CD14-positive monocyte (primary cell): ENCODE measurements at regions of chr22 and their contacts with region 1.

Region 1: GRCh38 chr22:36856121-36856791 is 4.5 kb upstream of the NCF4 start:
- DNase-seq: peak; percentile 89 to 92 (median 90)
- H3K4me3 ChIP-seq: peak overlapping the region in 1 of 3 experiments; percentile 39
- H3K4me3 Mint-ChIP-seq: peak overlapping the region; percentile 39 to 94
- H3K27ac ChIP-seq: no peak overlapping the region
- H3K27ac Mint-ChIP-seq: peak overlapping the region in 3 of 7 donors; percentile 59 to 91 (median 74)
- H3K4me1 ChIP-seq: peaks cover 58 to 67% of the 10 kb centered on the region in 2 donors
- H3K4me1 Mint-ChIP-seq: peaks cover 60% of the 10 kb centered on the region
- H3K27me3 ChIP-seq: peaks cover 0 to 4% of the 10 kb centered on the region in 2 donors
- H3K27me3 Mint-ChIP-seq: peaks cover under 1 to 3% (median 2%) of the 10 kb centered on the region in 3 donors
- CTCF ChIP-seq: peak; percentile 100

Region 2: DNA sequence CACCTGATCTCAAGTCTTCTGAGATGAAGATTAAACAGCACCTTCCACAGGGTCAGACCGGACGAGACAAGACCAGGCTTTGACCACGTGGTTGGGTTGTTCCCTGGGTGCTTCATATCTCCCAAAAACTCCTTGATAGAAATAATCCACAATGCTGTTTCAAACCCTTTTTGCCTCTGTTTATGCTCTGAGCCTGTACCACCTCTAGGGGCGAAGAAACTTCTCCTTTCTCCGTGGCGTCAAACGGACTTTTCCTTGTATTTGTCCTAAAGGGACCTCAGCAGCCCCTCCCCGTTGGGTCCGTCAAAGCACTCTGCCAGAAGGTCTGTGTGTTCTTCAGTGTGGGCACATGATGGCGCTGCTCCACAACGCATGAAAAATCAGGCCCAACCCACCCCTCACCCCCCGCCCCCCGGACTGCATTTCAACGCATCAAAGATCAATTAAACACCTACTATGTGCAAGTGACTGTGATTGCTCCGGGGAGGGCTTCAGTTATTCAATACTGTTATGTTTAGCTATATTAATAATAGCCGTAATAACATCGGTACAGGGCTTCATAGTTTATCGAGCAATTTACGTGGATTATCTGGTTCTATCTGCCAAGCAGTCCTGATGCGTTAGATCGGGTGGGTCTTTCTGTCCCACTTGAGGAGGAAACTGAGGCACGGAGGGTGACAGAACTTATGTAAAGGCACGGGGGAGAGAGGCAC is 310.0 kb before region 1 on chr22:
- intact Hi-C with region 1: loop called in 1 of 2 experiments (anchors 10 kb)
- DNase-seq: peak; percentile 33 to 55 (median 33)
- H3K4me3 ChIP-seq: no peak overlapping the region
- H3K4me3 Mint-ChIP-seq: peak overlapping the region in 1 of 2 donors; percentile 41
- H3K27ac ChIP-seq: no peak overlapping the region
- H3K27ac Mint-ChIP-seq: peak overlapping the region in 2 of 7 donors; percentile 61 to 64
- H3K4me1 ChIP-seq: peaks cover 0 to 5% of the 10 kb centered on the region in 2 donors
- H3K4me1 Mint-ChIP-seq: peaks cover 13% of the 10 kb centered on the region
- H3K27me3 ChIP-seq: peaks cover 0 to 4% of the 10 kb centered on the region in 2 donors
- H3K27me3 Mint-ChIP-seq: peaks cover 3 to 6% (median 5%) of the 10 kb centered on the region in 3 donors
- CTCF ChIP-seq: peak; percentile 75

Region 3: GRCh38 chr22:36781656-36782627 is 74.3 kb before region 1 on chr22:
- intact Hi-C with region 1: loop called (anchors 2 kb)
- DNase-seq: peak; percentile 78 to 88 (median 78)
- H3K4me3 ChIP-seq: no peak overlapping the region
- H3K4me3 Mint-ChIP-seq: peak overlapping the region in 1 of 2 donors; percentile 37
- H3K27ac ChIP-seq: no peak overlapping the region
- H3K27ac Mint-ChIP-seq: peak overlapping the region in 2 of 7 donors; percentile 57 to 63
- H3K4me1 ChIP-seq: peaks cover 3 to 7% of the 10 kb centered on the region in 2 donors
- H3K4me1 Mint-ChIP-seq: peaks cover 10% of the 10 kb centered on the region
- H3K27me3 ChIP-seq: peaks cover 0 to 6% of the 10 kb centered on the region in 2 donors
- H3K27me3 Mint-ChIP-seq: peaks cover 10 to 28% (median 27%) of the 10 kb centered on the region in 3 donors
- CTCF ChIP-seq: peak; percentile 94

Region 4: GRCh38 chr22:36913427-36914389 is 57.5 kb after region 1 on chr22 and contains the start of gene CSF2RB:
- intact Hi-C with region 1: loop called in 1 of 2 experiments (anchors 5 kb)
- DNase-seq: peak; percentile 85 to 96 (median 92)
- H3K4me3 ChIP-seq: peak within 1 kb of the TSS; percentile 53 to 84 (median 63)
- H3K4me3 Mint-ChIP-seq: peak within 1 kb of the TSS; percentile 87 to 97
- H3K27ac ChIP-seq: peak within 1 kb of the TSS; percentile 86 to 96
- H3K27ac Mint-ChIP-seq: peak within 1 kb of the TSS; percentile 92 to 99 (median 97)
- H3K4me1 ChIP-seq: peaks cover 31 to 62% of the 10 kb centered on the region in 2 donors
- H3K4me1 Mint-ChIP-seq: peaks cover 58% of the 10 kb centered on the region
- H3K27me3 ChIP-seq: no peaks in the 10 kb centered on the region
- H3K27me3 Mint-ChIP-seq: peaks cover 0 to 5% (median 0%) of the 10 kb centered on the region in 3 donors
- CTCF ChIP-seq: no peak
- polyA plus RNA-seq, gene CSF2RB: 29.9 to 91.1 (median 52.7) TPM